ENCODE measurements at regions of chr11 and their contacts with region 1.

Region 1: DNA sequence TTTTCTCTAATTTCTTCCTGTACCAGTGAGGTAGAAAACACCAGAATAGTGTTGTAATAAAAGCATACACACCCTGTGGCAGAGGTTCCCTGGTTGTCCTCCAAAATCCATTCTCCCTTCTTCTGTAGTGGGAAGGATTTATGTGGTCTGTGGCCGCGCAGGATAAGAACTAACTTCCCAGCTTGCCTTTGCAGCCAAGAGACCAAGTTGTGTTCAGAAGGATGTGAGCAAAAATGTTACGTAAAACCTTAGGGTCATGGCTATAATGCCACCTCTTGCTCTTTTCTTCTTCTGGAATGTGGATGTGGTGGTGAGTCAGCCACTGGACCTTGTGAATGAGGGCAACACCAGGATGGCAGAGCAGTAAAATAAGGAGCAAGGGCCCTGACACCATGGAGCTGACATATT is 28.4 kb downstream of the CCDC90B start:
- DNase-seq: peak in 1 of 2 donors; percentile 47
- ATAC-seq: peak; percentile 40
- H3K4me3 ChIP-seq: peak overlapping the region in 1 of 2 donors; percentile 12
- H3K27ac ChIP-seq: peak overlapping the region; percentile 12 to 63
- H3K4me1 ChIP-seq: peaks cover 0 to 7% of the 10 kb centered on the region in 2 donors
- H3K27me3 ChIP-seq: no peaks in the 10 kb centered on the region

Region 2: GRCh38 chr11:83275888-83276641 is 18.3 kb after region 1 on chr11:
- intact Hi-C with region 1: loop called in 1 of 2 experiments (anchors 2 kb)
- DNase-seq: no peak
- ATAC-seq: no peak
- H3K4me3 ChIP-seq: no peak overlapping the region
- H3K27ac ChIP-seq: no peak overlapping the region
- H3K4me1 ChIP-seq: no peaks in the 10 kb centered on the region
- H3K27me3 ChIP-seq: no peaks in the 10 kb centered on the region

Region 3: GRCh38 chr11:83364500-83365059 is 106.8 kb after region 1 on chr11:
- intact Hi-C with region 1: no loop called
- DNase-seq: no peak
- ATAC-seq: no peak
- H3K4me3 ChIP-seq: no peak overlapping the region
- H3K27ac ChIP-seq: no peak overlapping the region
- H3K4me1 ChIP-seq: no peaks in the 10 kb centered on the region
- H3K27me3 ChIP-seq: no peaks in the 10 kb centered on the region